ENCODE measurements at regions of chr20 and their contacts with region 1.

Region 1: DNA sequence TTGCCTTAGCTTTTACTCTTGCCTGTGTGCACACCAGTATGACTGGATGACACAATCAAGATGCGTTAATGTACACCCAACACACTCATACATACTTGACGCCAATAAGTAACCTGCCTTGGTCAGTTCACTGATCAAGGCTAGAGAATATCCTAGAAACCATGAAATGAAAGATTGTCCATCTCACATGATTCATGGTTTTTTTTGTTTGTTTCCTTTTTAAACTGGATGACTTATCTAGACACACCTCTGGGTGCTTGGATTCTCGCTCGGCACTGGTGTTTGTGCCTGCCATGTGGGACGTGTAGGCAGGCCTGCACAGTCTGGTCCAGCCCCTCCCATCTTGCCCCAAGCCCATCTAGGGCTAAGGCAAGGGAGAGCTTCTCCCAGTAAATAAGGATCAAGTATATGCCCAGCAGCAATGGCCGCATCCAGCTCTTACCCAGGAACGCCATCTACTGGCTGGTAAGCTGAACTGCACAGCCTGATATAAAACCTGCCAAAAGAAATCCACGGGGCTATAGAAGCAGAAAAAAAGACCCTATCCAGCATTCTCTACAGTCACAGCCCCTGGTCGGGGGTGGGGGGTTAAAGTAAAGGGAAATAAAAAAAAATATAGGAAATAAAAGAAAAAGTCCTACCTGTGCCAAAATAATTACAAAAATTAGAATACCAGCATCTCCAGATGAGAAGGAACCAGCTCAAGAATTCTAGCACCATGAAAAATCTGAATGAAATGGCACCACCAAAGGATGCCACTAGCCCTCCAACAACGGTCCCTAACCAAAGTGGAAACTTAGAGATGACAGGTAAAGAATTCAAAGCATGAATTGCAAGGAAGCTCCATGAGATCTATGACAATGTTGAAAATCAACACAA is 73.3 kb downstream of the OTOR start:
- DNase-seq: peak; percentile 13 to 52
- H3K4me3 ChIP-seq: no peak overlapping the region
- H3K27ac ChIP-seq: no peak overlapping the region
- H3K4me1 ChIP-seq: no peaks in the 10 kb centered on the region
- H3K27me3 ChIP-seq: no peaks in the 10 kb centered on the region
- CTCF ChIP-seq: peak; percentile 65 to 83 (median 82)
- EP300 ChIP-seq: peak in 1 of 2 experiments; percentile 18; a peak in 1 of 3 replicates
- POLR2A ChIP-seq: no peak
- RAD21 ChIP-seq: peak; percentile 82 to 89

Region 2: DNA sequence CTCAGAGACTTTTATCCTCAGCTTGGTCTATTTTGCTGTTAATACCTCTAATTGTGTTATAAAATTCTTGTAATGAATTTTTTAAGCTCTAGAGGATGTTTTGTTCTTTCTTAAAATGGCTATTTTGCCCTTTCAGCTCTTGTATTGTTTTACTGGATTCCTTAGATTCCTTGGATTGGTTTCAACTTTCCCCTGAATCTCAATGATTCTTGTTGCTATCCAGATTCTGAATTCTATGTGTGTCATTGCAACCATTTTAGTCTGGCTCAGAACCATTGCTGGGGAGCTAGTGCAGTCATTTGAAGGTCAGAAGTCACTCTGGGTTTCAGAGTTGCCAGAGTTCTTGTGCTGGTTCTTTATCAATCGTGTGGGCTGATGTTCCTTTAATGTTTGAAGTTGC is 36.2 kb before region 1 on chr20:
- CTCF ChIA-PET with region 1: no interaction called
- POLR2A ChIA-PET with region 1: no interaction called
- DNase-seq: no peak
- H3K4me3 ChIP-seq: no peak overlapping the region; a peak in 1 of 8 replicates
- H3K27ac ChIP-seq: no peak overlapping the region
- H3K4me1 ChIP-seq: peaks cover 2 to 7% (median 4%) of the 10 kb centered on the region in 4 experiments; a peak in 3 of 7 replicates
- H3K27me3 ChIP-seq: no peaks in the 10 kb centered on the region
- CTCF ChIP-seq: no peak
- EP300 ChIP-seq: no peak
- POLR2A ChIP-seq: no peak
- RAD21 ChIP-seq: no peak

Region 3: GRCh38 chr20:16842486-16843120 is 21.2 kb after region 1 on chr20:
- CTCF ChIA-PET with region 1: interaction called, 16 read pairs
- POLR2A ChIA-PET with region 1: no interaction called
- DNase-seq: no peak
- H3K4me3 ChIP-seq: no peak overlapping the region
- H3K27ac ChIP-seq: no peak overlapping the region
- H3K4me1 ChIP-seq: no peaks in the 10 kb centered on the region; a peak in 1 of 7 replicates
- H3K27me3 ChIP-seq: no peaks in the 10 kb centered on the region
- CTCF ChIP-seq: no peak
- EP300 ChIP-seq: no peak
- POLR2A ChIP-seq: no peak
- RAD21 ChIP-seq: no peak

Region 4: DNA sequence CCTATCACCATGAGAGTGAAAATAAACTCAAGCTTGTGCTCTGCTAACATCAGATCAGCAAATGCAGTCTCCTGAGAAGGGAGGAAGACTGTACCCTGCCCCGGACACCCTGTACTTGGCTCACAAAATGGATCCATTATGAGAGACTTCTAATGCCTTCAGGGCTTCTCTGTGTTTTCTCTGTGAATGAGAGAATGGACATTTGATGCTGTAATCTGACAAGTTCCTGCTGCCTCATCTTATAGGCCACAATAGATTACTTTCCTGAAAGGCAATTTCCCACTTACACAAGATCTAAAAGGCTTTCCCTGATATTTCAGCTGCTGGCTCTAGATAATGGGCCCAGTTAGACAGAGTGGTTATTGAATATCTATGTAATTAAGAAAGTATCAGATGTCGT is 44.0 kb after region 1 on chr20:
- CTCF ChIA-PET with region 1: interaction called, 10 read pairs
- POLR2A ChIA-PET with region 1: no interaction called
- DNase-seq: no peak
- H3K4me3 ChIP-seq: no peak overlapping the region
- H3K27ac ChIP-seq: no peak overlapping the region
- H3K4me1 ChIP-seq: no peaks in the 10 kb centered on the region
- H3K27me3 ChIP-seq: no peaks in the 10 kb centered on the region; a peak in 1 of 7 replicates
- CTCF ChIP-seq: no peak
- EP300 ChIP-seq: no peak
- POLR2A ChIP-seq: no peak
- RAD21 ChIP-seq: no peak

Region 5: DNA sequence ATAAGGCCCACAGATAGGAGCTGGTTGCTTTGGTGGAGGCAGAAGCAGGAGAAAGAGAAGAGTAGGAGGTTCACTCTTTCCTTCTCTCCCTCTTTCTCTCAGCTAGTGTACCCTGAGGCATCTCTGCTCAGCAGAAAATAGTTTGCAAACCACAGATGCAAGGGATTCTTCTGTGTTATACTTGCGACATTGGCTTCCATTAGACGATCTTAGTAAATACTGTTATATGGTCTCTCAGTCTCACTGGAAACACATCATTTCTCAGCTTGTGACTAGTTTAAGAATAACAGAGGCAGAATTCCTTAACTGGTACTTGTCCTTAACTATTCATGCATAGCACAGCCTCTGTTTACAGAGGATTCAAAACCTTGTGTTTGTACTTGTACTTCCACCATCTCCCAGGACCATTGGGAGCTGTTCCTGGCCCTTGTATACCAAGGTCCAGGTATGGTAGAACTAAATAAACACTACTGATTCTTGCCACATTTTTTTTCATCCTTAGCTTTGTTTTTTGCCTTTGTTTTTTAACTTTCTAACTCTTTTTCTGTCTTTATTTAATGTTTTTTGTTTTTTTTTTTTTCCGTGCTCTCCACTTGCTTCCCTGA is 144.9 kb after region 1 on chr20:
- CTCF ChIA-PET with region 1: no interaction called
- POLR2A ChIA-PET with region 1: no interaction called
- DNase-seq: no peak
- H3K4me3 ChIP-seq: no peak overlapping the region
- H3K27ac ChIP-seq: no peak overlapping the region
- H3K4me1 ChIP-seq: no peaks in the 10 kb centered on the region
- H3K27me3 ChIP-seq: no peaks in the 10 kb centered on the region
- CTCF ChIP-seq: no peak
- EP300 ChIP-seq: no peak
- POLR2A ChIP-seq: no peak
- RAD21 ChIP-seq: no peak

Measured in H1 (cell line).